Activated CD8-positive, alpha-beta T cell treated with anti-CD3 and anti-CD28 coated beads, Interleukin-2, amount 10 ng/mL, durations not matched to agents 7 days and 5 days (primary cell): ENCODE measurements at regions of chr2 and their contacts with region 1.

Region 1: GRCh38 chr2:237572021-237572741 is 5.8 kb downstream of the PRLH start:
- DNase-seq: peak; percentile 89
- ATAC-seq: peak; percentile 98
- H3K4me3 Mint-ChIP-seq: no peak overlapping the region
- H3K27ac Mint-ChIP-seq: no peak overlapping the region
- H3K4me1 Mint-ChIP-seq: peaks cover 5% of the 10 kb centered on the region
- H3K27me3 Mint-ChIP-seq: no peaks in the 10 kb centered on the region

Region 2: DNA sequence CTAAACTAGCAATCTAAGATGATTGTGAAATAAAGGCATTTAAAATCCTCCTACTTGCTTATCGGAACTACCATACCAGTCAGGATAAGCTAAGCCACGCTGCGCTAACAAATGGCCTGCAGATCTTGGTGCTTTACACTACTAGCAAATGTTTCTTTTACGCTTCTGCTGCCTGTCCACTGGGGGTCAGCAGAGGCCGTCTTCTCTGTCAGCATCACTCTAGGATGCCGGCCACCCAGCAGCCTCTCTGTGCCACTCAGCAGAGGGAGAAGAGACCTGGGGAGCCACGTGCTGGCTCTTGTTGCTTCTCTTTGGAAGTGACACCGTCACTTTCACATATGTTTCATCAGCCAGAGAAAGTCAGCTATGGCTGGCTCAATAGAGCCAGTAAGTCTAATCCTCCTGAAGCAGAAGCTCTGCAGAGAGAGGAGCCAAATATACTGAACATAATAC is 449.9 kb before region 1 on chr2:
- CTCF ChIA-PET with region 1: interaction called, 19 read pairs
- POLR2A ChIA-PET with region 1: no interaction called
- DNase-seq: peak; percentile 61
- ATAC-seq: peak; percentile 68
- H3K4me3 Mint-ChIP-seq: no peak overlapping the region
- H3K27ac Mint-ChIP-seq: no peak overlapping the region
- H3K4me1 Mint-ChIP-seq: no peaks in the 10 kb centered on the region
- H3K27me3 Mint-ChIP-seq: no peaks in the 10 kb centered on the region

Region 3: GRCh38 chr2:237154082-237154638 is 418.0 kb before region 1 on chr2:
- CTCF ChIA-PET with region 1: interaction called, 17 read pairs
- POLR2A ChIA-PET with region 1: no interaction called
- DNase-seq: peak; percentile 74
- ATAC-seq: peak; percentile 59
- H3K4me3 Mint-ChIP-seq: no peak overlapping the region
- H3K27ac Mint-ChIP-seq: no peak overlapping the region
- H3K4me1 Mint-ChIP-seq: peaks cover 35% of the 10 kb centered on the region
- H3K27me3 Mint-ChIP-seq: no peaks in the 10 kb centered on the region

Region 4: DNA sequence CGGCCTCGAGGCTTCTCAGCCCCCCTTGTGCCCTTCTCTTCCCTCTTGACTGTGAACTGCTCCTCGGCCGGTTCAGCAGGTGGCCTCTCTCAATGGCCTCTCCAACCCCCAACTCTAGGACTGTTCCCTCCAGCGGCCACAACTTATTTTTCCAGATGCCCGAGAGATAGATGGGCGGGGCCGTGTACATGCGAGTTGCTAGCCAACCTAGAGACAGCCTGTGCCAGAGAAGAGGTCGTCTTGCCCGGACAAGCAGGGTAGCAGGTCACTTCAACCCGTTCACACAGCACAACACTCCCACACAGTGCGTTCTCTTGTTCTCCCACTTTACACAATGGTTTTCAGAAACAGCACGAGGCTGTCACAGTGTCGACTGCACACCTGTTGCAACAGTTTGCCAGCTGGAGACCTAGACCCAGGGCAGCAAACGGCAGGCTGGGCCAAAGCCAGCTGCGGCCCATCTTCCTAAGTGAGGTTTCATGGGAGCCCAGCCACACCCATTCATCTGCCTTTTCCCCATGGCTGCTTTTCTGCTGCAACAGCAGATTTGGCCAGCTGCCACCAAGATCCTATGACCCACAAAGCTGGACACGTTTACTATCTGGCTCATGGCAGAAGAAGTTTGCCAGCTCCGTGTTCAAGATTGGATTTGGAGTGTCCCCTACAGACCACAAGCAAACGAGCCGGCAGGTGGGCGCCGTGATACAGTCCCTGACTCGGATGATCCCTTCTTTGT is 13.1 kb before region 1 on chr2:
- CTCF ChIA-PET with region 1: interaction called, 15 read pairs
- POLR2A ChIA-PET with region 1: no interaction called
- DNase-seq: no peak
- ATAC-seq: no peak
- H3K4me3 Mint-ChIP-seq: no peak overlapping the region
- H3K27ac Mint-ChIP-seq: no peak overlapping the region
- H3K4me1 Mint-ChIP-seq: peaks cover 11% of the 10 kb centered on the region
- H3K27me3 Mint-ChIP-seq: peaks cover 4% of the 10 kb centered on the region